Ascending aorta (tissue), 2 donors: ENCODE measurements at regions of chr12 and their contacts with region 1.

Region 1: GRCh38 chr12:83378186-83378727 is 691.6 kb downstream of the TMTC2 start:
- DNase-seq: no peak
- H3K4me3 ChIP-seq: no peak overlapping the region
- H3K27ac ChIP-seq: no peak overlapping the region
- H3K4me1 ChIP-seq: no peaks in the 10 kb centered on the region
- H3K27me3 ChIP-seq: no peaks in the 10 kb centered on the region
- CTCF ChIP-seq: no peak

Region 2: DNA sequence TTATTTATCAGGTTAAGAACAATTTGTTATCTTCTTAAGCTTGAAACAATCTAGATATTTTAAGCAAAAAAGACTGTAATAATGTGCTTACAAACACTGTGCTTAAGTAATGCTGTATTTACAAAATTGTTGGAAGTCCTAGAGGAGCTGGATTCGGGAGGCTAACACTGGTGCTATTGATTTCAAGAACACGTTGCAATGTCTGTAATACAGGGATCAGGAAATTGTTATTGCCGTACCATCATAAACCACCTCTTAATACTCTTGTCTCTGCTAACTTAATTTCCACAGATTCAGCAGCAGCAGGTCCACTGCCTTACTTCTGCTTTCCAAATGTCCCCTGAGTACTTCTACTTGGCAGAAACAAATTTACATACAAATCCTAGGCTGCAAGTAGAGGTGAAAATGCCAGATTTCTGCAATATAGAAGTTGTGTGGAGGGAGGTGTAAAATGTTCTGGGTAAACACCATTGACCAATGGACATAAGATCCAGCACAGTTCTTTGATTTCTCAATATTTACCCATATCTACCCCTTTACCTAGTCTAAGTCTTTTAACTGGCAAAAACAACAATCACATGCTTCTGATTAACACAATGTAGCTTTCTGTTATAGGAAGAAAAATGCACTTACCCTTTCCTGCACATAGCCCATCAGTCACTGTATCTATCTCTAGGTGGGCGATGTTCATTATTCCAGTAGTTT is 28.2 kb before region 1 on chr12:
- intact Hi-C with region 1: loop called (anchors 2 kb)
- DNase-seq: no peak
- H3K4me3 ChIP-seq: no peak overlapping the region
- H3K27ac ChIP-seq: no peak overlapping the region
- H3K4me1 ChIP-seq: no peaks in the 10 kb centered on the region
- H3K27me3 ChIP-seq: no peaks in the 10 kb centered on the region
- CTCF ChIP-seq: no peak

Region 3: DNA sequence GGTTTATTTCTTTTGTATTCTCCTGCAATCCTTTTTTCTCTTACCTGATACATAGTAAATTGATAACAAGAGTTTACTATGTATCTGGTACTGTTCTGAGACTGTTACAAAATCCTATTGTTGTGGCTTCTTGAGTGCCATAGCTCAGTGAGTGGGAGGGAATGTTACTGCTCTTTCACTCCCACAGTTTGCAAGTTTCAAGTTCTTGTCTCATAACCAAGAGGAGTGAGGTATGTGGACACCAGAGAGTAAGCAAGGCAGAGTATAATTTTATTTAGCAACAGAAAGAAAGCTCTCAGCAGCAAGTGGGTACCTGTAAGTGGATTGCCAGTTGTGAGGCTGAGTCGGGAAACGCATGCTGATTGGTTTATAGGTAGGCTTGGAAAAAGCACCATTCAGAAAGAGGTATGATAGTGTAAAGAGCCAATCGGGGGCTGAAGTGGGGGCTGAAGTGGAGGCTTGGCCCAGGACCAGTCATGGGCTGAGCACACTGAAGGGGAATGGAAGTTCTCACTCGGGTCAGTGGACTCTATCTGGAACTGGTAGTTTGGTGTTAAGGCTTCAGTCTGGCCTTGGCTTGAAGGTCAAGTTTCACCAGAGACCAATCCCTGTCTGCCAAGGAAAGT is 159.3 kb after region 1 on chr12:
- intact Hi-C with region 1: no loop called
- DNase-seq: no peak
- H3K4me3 ChIP-seq: no peak overlapping the region
- H3K27ac ChIP-seq: no peak overlapping the region
- H3K4me1 ChIP-seq: no peaks in the 10 kb centered on the region
- H3K27me3 ChIP-seq: no peaks in the 10 kb centered on the region
- CTCF ChIP-seq: no peak

Region 4: GRCh38 chr12:84016956-84017355 is 638.7 kb after region 1 on chr12:
- intact Hi-C with region 1: no loop called
- DNase-seq: no peak
- H3K4me3 ChIP-seq: no peak overlapping the region
- H3K27ac ChIP-seq: no peak overlapping the region
- H3K4me1 ChIP-seq: no peaks in the 10 kb centered on the region
- H3K27me3 ChIP-seq: no peaks in the 10 kb centered on the region
- CTCF ChIP-seq: no peak